ENCODE measurements at regions of chr22 and their contacts with region 1.

Region 1: DNA sequence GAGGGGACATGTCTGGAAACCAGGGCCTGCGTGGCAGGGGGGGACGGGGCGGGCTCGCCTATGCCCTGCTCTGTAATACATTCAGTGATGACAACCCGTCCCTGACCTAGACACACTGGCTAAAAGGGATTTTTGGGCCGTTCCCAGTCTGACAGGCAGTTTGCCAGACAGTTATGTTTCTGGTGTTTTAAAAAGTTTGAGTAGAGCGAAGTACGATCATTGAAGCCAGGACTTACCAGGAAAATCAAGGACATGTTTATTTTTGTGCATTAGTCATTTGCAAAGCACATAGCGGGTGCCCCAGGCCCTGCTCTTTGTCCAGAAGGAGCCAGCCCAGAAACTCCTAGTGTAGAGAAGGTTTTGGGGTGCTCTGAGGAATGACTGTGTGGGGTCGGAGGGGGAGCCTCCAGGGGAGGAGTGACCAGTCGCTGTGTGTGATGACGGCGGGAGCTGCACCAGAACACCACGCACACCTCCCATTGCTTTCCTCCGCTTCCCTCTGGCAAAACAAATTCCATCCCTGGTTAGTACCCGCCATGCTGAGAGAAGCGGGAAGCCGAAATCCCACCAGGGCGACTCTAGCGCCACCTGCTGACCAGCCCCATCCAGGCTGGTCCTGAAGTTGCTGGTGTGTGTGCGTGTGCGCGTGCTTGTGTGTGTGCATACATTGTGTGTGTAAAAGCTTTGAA is 50.8 kb downstream of the FBLN1 start:
- DNase-seq: peak; percentile 76 to 95
- H3K4me3 ChIP-seq: peak overlapping the region in 1 of 2 donors; percentile 12
- H3K27ac ChIP-seq: peak overlapping the region; percentile 94 to 97
- H3K4me1 ChIP-seq: peaks cover 25 to 55% of the 10 kb centered on the region in 2 donors
- H3K27me3 ChIP-seq: no peaks in the 10 kb centered on the region
- CTCF ChIP-seq: peak; percentile 92 to 97 (median 94)

Region 2: DNA sequence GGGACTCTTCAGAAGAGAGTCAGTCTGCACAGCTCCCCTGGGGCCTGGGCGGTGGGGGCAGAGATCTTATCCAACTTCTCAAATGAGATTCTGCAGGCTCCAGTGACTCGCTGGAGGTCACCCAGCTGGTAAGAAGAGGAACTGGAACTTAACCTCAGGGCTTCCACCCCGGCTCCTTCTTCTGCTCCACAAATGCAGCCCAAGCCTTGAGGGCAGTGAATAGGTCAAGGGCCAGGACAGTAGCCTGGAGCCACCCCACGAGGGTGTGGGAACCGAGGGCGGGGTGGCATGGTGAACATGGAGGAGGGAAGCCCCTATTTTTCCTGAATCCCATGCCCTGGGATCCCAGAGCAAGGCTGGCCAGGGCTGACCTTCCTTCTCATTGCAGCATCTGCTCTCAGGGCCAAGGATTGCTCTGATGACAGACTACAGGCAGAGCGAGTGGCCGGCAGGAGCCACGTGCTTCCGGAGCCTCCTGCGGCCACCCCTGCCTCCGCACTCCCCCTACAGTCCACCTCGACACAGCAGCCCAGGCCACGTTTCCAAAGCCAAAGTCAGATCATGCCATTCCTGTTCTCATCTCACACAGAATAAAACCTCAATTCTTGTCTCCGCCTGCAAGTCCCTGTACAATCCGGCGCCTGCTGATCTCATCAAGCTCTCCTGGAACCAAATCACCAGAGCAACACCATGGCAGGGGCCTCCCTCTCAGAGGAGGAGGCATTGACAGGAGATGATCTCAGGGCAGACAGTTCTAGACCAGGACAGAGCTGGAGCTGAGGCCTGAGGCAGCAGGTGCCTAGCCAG is 289.8 kb before region 1 on chr22:
- intact Hi-C with region 1: loop called (anchors 1 kb)
- DNase-seq: peak in 1 of 2 donors; percentile 85
- H3K4me3 ChIP-seq: no peak overlapping the region
- H3K27ac ChIP-seq: no peak overlapping the region
- H3K4me1 ChIP-seq: peaks cover under 1 to 4% of the 10 kb centered on the region in 2 donors
- H3K27me3 ChIP-seq: no peaks in the 10 kb centered on the region
- CTCF ChIP-seq: peak; percentile 67 to 72 (median 72)

Region 3: GRCh38 chr22:45309472-45310227 is 243.8 kb before region 1 on chr22 and contains the start of gene FAM118A:
- intact Hi-C with region 1: loop called (anchors 1 kb)
- DNase-seq: peak; percentile 76 to 95
- H3K4me3 ChIP-seq: peak within 1 kb of the TSS; percentile 93 to 99
- H3K27ac ChIP-seq: peak within 1 kb of the TSS; percentile 78 to 89
- H3K4me1 ChIP-seq: peaks cover 0 to 3% of the 10 kb centered on the region in 2 donors
- H3K27me3 ChIP-seq: no peaks in the 10 kb centered on the region
- CTCF ChIP-seq: no peak
- total RNA-seq, gene FAM118A: 23.5 TPM

Region 4: DNA sequence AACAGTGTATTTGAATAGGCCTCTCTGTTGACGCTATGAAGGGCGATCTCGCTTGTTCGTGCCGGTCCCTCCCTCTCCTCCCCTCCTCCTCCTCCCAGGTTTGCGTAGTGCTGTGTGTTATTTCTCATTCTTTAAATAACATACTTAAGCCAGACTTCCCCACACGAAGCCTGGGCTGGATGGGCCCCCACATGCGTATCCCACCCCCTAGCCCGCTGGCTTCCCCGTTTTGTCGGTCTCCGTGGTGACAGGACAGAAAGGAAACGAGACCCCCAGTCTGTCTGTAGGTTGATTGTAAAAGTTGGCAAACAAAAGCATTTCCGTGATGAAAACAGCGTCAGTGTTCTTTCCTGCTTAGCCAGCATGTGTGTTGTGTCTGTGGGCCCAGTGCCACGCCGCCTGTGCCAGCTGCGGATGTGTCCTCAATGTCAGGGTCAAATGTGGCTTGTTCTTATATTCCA is 216.5 kb before region 1 on chr22:
- intact Hi-C with region 1: loop called (anchors 5 kb)
- DNase-seq: peak; percentile 60 to 87
- H3K4me3 ChIP-seq: peak overlapping the region in 1 of 2 donors; percentile 50
- H3K27ac ChIP-seq: peak overlapping the region; percentile 54 to 73
- H3K4me1 ChIP-seq: peaks cover 12 to 30% of the 10 kb centered on the region in 2 donors
- H3K27me3 ChIP-seq: no peaks in the 10 kb centered on the region
- CTCF ChIP-seq: no peak

Region 5: DNA sequence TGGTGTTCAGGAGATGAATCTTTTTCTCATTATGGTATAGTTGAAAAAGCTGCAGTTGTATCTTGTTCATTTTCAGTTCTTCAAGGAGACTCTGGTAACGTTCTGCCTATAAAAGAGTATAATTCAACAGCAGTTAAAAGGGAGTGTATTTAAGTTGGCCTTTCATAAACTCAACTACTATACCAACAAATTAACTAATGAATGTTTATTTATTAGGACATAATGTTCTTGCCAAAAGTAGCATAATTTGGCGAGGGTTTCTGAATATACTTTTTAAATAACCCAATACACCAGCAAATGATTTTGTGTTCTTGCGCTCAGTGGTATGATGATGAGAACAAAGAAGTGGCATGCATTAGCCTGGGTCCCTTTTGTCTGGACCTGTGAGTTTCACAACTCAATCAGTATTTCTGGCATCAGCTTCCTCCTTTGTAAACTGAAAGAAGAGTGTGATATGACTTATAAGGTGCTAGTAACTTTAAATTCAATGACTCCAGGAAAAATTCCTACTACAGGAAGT is 151.0 kb before region 1 on chr22:
- intact Hi-C with region 1: no loop called
- DNase-seq: no peak
- H3K4me3 ChIP-seq: no peak overlapping the region
- H3K27ac ChIP-seq: no peak overlapping the region
- H3K4me1 ChIP-seq: no peaks in the 10 kb centered on the region
- H3K27me3 ChIP-seq: no peaks in the 10 kb centered on the region
- CTCF ChIP-seq: no peak

Region 6: GRCh38 chr22:45502215-45503049 is 51.1 kb before region 1 on chr22 and contains the start of gene FBLN1:
- intact Hi-C with region 1: loop called (anchors 2 kb)
- DNase-seq: no peak
- H3K4me3 ChIP-seq: peak within 1 kb of the TSS; percentile 56 to 70
- H3K27ac ChIP-seq: peak within 1 kb of the TSS; percentile 66 to 72
- H3K4me1 ChIP-seq: peaks cover 0 to 22% of the 10 kb centered on the region in 2 donors
- H3K27me3 ChIP-seq: no peaks in the 10 kb centered on the region
- CTCF ChIP-seq: peak in 2 of 3 experiments; percentile 16 to 30
- total RNA-seq, gene FBLN1: 580 TPM

Region 7: GRCh38 chr22:45537734-45538181 is 15.7 kb before region 1 on chr22:
- intact Hi-C with region 1: loop called (anchors 1 kb)
- DNase-seq: peak; percentile 56 to 90
- H3K4me3 ChIP-seq: peak overlapping the region in 1 of 2 donors; percentile 35
- H3K27ac ChIP-seq: peak overlapping the region; percentile 72 to 79
- H3K4me1 ChIP-seq: peaks cover 4 to 28% of the 10 kb centered on the region in 2 donors
- H3K27me3 ChIP-seq: no peaks in the 10 kb centered on the region
- CTCF ChIP-seq: no peak